ENCODE measurements at regions of chr6 and their contacts with region 1.

Region 1: GRCh38 chr6:42043787-42044475 is 6.4 kb upstream of the TAF8 start:
- DNase-seq: peak; percentile 92 to 96 (median 93)
- H3K4me3 ChIP-seq: peak overlapping the region in 2 of 3 donors; percentile 12 to 21
- H3K27ac ChIP-seq: peak overlapping the region in 1 of 2 donors; percentile 0
- H3K4me1 ChIP-seq: peaks cover 0 to 33% (median 16%) of the 10 kb centered on the region in 3 donors
- H3K27me3 ChIP-seq: no peaks in the 10 kb centered on the region
- CTCF ChIP-seq: peak; percentile 98

Region 2: DNA sequence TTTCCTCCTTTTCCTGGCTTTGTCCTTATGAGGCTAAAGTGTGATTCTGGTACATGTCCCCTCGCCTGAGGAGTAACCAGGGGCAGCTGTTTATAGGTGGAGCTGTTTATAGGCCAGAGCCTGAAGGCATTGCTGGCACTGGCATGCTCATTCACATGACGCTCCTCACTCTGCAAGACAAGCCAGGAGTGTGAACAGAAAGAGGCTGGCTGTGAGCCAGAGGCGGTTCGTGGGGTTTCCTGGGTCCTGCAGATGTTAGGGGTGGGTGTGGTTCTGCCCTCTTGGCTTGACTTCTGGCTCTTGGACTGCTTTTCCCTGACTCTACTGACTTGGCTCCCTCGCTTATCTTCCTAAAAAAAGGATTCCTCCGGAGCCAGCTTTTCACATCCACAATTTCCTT is 418.5 kb before region 1 on chr6:
- intact Hi-C with region 1: no loop called
- DNase-seq: no peak
- H3K4me3 ChIP-seq: no peak overlapping the region
- H3K27ac ChIP-seq: no peak overlapping the region
- H3K4me1 ChIP-seq: peaks cover 2 to 4% (median 2%) of the 10 kb centered on the region in 3 donors
- H3K27me3 ChIP-seq: no peaks in the 10 kb centered on the region
- CTCF ChIP-seq: no peak

Region 3: DNA sequence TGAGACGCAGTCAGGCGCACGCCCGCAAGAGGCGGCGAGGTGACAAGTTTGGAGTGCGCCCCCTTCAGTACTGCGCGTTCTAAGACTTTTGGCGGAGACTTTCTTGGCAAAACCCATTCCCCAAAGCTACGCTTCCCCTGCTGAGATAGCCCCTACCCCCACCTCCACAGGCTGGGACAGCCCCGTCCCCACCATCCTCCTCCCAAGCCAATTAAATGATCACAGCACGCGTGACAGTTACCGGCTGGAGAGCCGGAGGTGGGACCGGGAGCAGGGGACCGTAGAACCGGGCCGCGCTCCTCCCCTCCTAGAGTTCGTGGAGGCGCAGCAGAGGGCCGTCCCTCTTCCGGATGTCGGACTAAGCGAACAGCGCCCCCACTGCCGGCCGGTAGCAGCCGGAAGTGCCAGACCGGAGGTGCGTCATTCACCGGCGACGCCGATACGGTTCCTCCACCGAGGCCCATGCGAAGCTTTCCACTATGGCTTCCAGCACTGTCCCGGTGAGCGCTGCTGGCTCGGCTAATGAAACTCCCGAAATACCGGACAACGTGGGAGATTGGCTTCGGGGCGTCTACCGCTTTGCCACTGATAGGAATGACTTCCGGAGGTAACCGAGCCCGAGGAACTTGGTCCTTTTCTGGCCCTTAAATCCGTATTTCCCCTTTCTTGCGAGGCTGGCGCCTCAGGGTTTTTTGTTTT is 256.6 kb before region 1 on chr6 and contains the start of gene TOMM6:
- intact Hi-C with region 1: loop called (anchors 10 kb)
- DNase-seq: peak; percentile 97 to 98 (median 97)
- H3K4me3 ChIP-seq: peak within 1 kb of the TSS; percentile 94 to 100 (median 98)
- H3K27ac ChIP-seq: peak within 1 kb of the TSS; percentile 92 to 97
- H3K4me1 ChIP-seq: peaks cover 0 to 13% (median 0%) of the 10 kb centered on the region in 3 donors
- H3K27me3 ChIP-seq: no peaks in the 10 kb centered on the region
- CTCF ChIP-seq: peak; percentile 91
- total RNA-seq, gene TOMM6: 150 TPM

Region 4: GRCh38 chr6:41936073-41936837 is 107.7 kb before region 1 on chr6:
- intact Hi-C with region 1: loop called (anchors 10 kb)
- DNase-seq: peak; percentile 56 to 82 (median 74)
- H3K4me3 ChIP-seq: no peak overlapping the region
- H3K27ac ChIP-seq: no peak overlapping the region
- H3K4me1 ChIP-seq: peaks cover 4 to 21% (median 5%) of the 10 kb centered on the region in 3 donors
- H3K27me3 ChIP-seq: no peaks in the 10 kb centered on the region
- CTCF ChIP-seq: peak; percentile 73

Measured in kidney (tissue), 22 donors.